Naive thymus-derived CD8-positive, alpha-beta T cell (primary cell): ENCODE measurements at regions of chr21 and their contacts with region 1.

Region 1: GRCh38 chr21:32412162-32413014 is at the start of gene EVA1C:
- DNase-seq: peak; percentile 52 to 85 (median 78)
- ATAC-seq: peak; percentile 69
- H3K4me3 Mint-ChIP-seq: peak within 1 kb of the TSS; percentile 90 to 98 (median 94)
- H3K27ac Mint-ChIP-seq: peak within 1 kb of the TSS; percentile 89 to 97 (median 95)
- H3K4me1 Mint-ChIP-seq: peaks cover 38 to 69% (median 63%) of the 10 kb centered on the region in 4 donors
- H3K27me3 Mint-ChIP-seq: no peaks in the 10 kb centered on the region
- polyA plus RNA-seq, gene EVA1C: 11.2 to 14.9 (median 14.3) TPM

Region 2: GRCh38 chr21:32392880-32393676 is 19.3 kb before region 1 on chr21 and contains the start of gene URB1:
- POLR2A ChIA-PET with region 1: interaction called, 18 read pairs
- DNase-seq: peak; percentile 90 to 99 (median 95)
- ATAC-seq: peak; percentile 93 to 98
- H3K4me3 Mint-ChIP-seq: peak within 1 kb of the TSS; percentile 81 to 91 (median 88)
- H3K27ac Mint-ChIP-seq: peak within 1 kb of the TSS; percentile 34 to 93 (median 85)
- H3K4me1 Mint-ChIP-seq: peaks cover 23 to 53% (median 48%) of the 10 kb centered on the region in 4 donors
- H3K27me3 Mint-ChIP-seq: peaks cover 0 to 8% (median 0%) of the 10 kb centered on the region in 5 donors
- polyA plus RNA-seq, gene URB1: 2.2 to 5.6 (median 2.8) TPM

Region 3: DNA sequence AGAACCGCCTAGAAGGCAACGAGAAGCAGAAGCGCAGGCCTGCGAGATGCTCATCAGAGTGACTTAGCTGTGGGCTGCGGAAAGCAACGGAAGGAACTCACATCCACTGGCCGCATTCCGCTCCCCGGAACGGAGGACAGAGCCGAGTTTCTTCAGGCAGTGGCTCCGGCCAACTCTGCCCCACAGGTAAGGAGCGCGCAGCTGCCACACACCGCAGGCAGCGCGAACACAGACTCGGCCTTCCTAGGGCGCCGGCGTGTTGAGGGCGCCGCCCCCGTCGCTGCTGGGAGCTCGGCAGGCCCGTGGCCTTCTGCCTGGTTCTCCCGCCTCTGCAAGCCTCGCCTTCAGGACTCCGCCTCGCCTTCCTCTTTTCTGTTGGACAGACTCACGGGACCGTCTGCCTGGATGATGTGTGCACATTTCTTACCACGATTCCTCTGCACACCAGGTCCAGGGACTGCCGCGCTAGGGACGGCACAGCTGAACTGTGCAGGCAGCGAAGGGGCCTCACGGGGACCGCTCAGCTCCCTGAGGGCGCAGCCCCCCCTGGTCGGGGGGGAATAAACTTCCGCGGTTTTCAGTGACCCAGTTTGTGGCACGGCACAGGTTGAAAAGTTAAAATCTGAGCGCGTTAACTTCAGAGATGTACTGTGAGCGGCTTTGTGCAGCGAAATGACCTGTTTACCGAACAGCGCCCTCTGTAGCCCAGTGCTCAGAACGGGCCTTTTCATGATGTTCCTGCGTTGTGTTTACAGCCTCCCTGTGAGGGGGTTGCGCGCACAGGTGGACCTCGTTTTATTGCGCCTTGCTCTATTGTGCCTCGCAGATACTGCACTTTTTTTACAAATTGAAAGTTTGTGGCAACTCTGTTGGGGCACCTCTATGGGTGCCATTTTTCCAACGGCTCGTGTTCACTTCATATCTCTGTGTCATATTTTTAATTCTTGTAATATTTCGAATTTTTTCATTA is 157.2 kb after region 1 on chr21:
- POLR2A ChIA-PET with region 1: interaction called, 39 read pairs
- DNase-seq: peak; percentile 70 to 90 (median 80)
- ATAC-seq: peak; percentile 88 to 90
- H3K4me3 Mint-ChIP-seq: peak overlapping the region; percentile 89 to 98 (median 94)
- H3K27ac Mint-ChIP-seq: peak overlapping the region; percentile 89 to 97 (median 94)
- H3K4me1 Mint-ChIP-seq: peaks cover 8 to 27% (median 24%) of the 10 kb centered on the region in 4 donors
- H3K27me3 Mint-ChIP-seq: no peaks in the 10 kb centered on the region

Region 4: DNA sequence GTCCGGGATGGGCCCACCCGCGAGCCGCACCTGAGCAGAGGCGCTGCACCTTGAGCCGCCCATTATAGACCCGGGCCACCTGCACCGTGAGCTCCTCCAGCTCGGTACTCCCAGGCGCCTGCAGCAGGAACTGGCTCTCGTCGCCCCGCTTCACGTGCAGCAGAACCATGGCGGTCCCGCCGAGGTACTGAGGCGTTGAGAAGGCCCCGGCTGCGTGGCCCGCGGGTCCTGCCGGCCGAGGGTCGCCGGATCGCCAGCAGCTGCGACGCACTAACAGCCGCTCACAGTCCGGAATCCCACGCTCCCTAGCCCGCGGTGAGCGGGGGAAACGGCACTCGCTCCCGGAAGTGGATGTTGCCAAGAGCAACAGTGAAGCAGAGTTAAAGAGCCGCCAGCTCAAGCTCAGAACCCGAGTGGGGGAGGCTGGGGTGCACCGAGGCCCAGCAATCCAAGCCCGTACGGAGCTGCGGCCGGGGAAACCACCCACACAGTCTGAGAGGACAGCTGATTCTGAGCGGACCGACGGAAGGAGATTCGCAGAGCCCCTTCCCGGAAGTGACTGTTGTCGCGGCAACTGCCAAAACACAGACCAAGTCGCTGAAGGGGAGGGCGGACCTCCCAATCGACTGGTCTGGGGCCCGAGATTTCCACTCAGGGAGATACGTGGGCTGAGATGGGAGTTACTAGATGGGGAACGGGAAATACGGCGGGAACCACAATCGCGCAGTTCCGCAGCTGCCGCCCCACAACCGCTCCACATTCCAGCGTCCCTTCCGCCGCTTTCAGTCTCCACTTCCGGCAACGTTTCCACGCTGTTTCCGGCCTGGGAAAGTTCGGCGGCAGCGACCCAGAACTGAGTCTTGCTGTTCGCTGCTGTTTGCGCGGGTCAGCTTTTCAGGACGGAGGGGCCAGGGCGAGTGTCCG is 199.9 kb after region 1 on chr21 and contains the start of gene CFAP298:
- POLR2A ChIA-PET with region 1: interaction called, 18 read pairs
- DNase-seq: peak; percentile 71 to 95 (median 92)
- ATAC-seq: peak; percentile 89 to 93
- H3K4me3 Mint-ChIP-seq: peak within 1 kb of the TSS; percentile 90 to 100 (median 97)
- H3K27ac Mint-ChIP-seq: peak within 1 kb of the TSS; percentile 91 to 99 (median 99)
- H3K4me1 Mint-ChIP-seq: peaks cover 8 to 31% (median 18%) of the 10 kb centered on the region in 4 donors
- H3K27me3 Mint-ChIP-seq: peaks cover 0 to 3% (median 0%) of the 10 kb centered on the region in 5 donors
- polyA plus RNA-seq, gene CFAP298: 59.4 to 64.2 (median 62.3) TPM